ENCODE measurements at regions of chr5 and their contacts with region 1.

Region 1: GRCh38 chr5:95261437-95262175 is 23.3 kb downstream of the MCTP1 start:
- DNase-seq: no peak
- H3K4me3 Mint-ChIP-seq: no peak overlapping the region
- H3K27ac Mint-ChIP-seq: no peak overlapping the region
- H3K4me1 Mint-ChIP-seq: no peaks in the 10 kb centered on the region
- H3K27me3 Mint-ChIP-seq: no peaks in the 10 kb centered on the region

Region 2: DNA sequence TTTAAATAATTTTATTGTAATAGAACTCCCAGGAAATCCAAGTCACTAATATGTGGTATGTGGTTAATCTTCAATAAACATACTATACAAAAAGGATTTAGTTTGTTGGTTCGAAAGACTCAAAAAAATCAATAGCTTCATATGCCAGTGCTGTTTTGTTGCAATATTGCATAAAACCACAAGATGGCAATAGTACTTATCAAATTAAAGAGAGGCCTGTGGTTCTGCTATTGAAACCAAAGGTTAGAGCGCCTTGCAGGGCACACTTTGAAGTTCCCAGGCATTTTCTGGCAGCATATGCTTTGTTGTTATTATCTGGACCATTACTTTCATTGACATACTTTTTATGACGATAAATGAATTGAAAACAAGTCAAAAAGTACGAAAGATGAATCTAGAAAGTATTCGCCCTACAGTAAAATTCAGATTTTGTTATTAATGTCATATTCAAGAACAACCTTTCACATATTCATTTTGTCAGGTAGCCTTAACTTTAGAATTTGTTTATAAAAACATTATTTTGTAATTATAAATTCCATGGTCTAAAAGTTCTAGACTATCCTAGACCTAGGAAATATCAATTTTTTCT is 293.0 kb before region 1 on chr5:
- CTCF ChIA-PET with region 1: no interaction called
- POLR2A ChIA-PET with region 1: no interaction called
- intact Hi-C with region 1: loop called (anchors 1 kb)
- DNase-seq: no peak
- H3K4me3 Mint-ChIP-seq: no peak overlapping the region
- H3K27ac Mint-ChIP-seq: no peak overlapping the region
- H3K4me1 Mint-ChIP-seq: no peaks in the 10 kb centered on the region
- H3K27me3 Mint-ChIP-seq: no peaks in the 10 kb centered on the region

Measured in activated CD4-positive, alpha-beta memory T cell treated with anti-CD3 and anti-CD28 coated beads for 36 hours (primary cell).